ENCODE measurements at regions of chr9 and their contacts with region 1.

Region 1: GRCh38 chr9:124794902-124795491 is 18.1 kb downstream of the OLFML2A start:
- DNase-seq: no peak
- CTCF ChIP-seq: no peak

Region 2: DNA sequence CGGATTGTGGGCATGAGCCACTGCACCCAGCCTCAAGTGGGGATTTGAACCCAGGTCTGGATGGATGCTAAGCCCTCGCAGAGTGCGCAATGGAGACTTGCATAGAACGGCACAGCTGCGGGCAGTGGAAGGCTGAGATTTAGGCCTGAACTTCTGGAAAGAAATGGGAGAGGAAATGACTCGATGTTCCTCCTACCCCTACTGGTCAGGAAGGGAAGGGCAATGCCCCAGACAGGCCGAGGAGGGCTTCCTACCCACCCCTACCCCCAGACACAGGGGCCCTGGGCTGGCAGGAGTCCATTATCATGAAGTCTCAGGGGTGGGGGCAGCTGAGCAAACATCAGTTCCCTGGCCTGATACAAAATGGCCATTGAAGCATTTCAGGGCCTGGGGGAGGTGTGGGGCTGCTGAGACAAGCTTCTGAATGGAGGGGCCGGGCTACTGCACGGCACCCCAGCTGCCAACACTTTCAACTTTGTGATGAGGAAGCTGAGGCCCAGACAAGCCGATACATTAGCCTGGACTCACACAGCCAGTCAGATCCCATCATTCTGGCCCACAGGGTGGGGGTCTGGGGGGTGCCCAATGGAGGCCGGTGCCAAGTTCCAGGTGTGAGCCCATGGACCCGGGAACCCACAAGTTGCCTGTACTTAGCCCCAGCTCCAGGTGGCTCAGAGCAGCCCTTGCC is 44.8 kb after region 1 on chr9:
- in situ Hi-C with region 1: loop called (anchors 10 kb)
- DNase-seq: no peak
- CTCF ChIP-seq: peak; percentile 25

Region 3: DNA sequence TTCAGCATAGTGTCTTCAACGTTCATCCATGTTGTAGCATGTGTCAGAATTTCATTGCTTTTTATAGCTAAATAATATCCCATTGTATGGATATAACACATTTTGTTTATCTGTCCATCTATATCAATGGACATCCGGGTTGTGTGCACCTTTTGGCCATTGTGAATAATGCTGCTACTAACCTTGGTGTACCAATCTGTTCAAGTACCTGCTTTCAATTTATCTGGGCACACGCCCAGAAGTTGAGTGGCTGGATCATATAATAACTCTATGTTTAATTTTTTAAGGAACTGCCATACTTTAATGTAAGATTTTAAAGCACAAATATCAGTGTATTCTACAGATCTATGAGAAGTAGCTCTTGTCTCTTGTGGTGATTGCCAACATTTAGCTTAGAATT is 304.8 kb after region 1 on chr9:
- in situ Hi-C with region 1: no loop called
- DNase-seq: no peak
- CTCF ChIP-seq: no peak

Region 4: GRCh38 chr9:125325831-125326230 is 530.8 kb after region 1 on chr9:
- in situ Hi-C with region 1: no loop called
- DNase-seq: no peak
- CTCF ChIP-seq: no peak